ENCODE measurements at regions of chr15 and their contacts with region 1.

Region 1: GRCh38 chr15:39171944-39172368 is 408.9 kb upstream of the THBS1 start:
- DNase-seq: peak in 2 of 3 donors; percentile 50 to 68
- ATAC-seq: peak; percentile 88 to 92
- H3K4me3 ChIP-seq: no peak overlapping the region
- H3K27ac ChIP-seq: peak overlapping the region; percentile 14
- H3K4me1 ChIP-seq: peaks cover 5% of the 10 kb centered on the region
- H3K27me3 ChIP-seq: no peaks in the 10 kb centered on the region

Region 2: GRCh38 chr15:38996111-38996631 is 175.8 kb before region 1 on chr15:
- intact Hi-C with region 1: loop called in 1 of 4 experiments (anchors 5 kb)
- DNase-seq: no peak
- ATAC-seq: peak; percentile 27 to 41
- H3K4me3 ChIP-seq: no peak overlapping the region
- H3K27ac ChIP-seq: no peak overlapping the region
- H3K4me1 ChIP-seq: peaks cover 9% of the 10 kb centered on the region
- H3K27me3 ChIP-seq: no peaks in the 10 kb centered on the region

Region 3: GRCh38 chr15:39059917-39060316 is 112.0 kb before region 1 on chr15:
- intact Hi-C with region 1: loop called in 1 of 4 experiments (anchors 10 kb)
- DNase-seq: no peak
- ATAC-seq: no peak
- H3K4me3 ChIP-seq: no peak overlapping the region
- H3K27ac ChIP-seq: no peak overlapping the region
- H3K4me1 ChIP-seq: no peaks in the 10 kb centered on the region
- H3K27me3 ChIP-seq: no peaks in the 10 kb centered on the region

Region 4: DNA sequence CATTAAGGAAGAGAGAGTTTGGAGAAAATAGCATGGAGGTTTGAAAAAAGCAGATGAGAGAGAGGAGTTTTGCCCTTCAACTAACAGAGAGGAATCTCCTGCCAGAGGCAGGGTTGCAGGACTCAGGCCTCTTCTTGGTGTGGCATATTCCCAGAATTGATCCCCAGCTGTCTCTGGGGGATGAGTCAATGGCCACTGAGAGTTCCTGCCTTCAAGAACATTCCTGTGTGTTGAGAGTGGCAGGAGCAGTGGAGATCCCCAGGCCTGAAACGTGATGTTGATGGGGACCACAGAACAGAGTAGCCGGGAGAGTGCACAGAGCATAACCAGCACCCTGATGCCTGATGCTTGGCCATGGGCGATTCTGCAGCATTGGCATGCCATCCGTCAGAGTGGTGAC is 60.6 kb after region 1 on chr15:
- intact Hi-C with region 1: no loop called
- DNase-seq: no peak
- ATAC-seq: peak in 1 of 2 donors; percentile 35
- H3K4me3 ChIP-seq: no peak overlapping the region
- H3K27ac ChIP-seq: no peak overlapping the region
- H3K4me1 ChIP-seq: peaks cover 3% of the 10 kb centered on the region
- H3K27me3 ChIP-seq: no peaks in the 10 kb centered on the region